Body of pancreas (tissue), 4 donors: ENCODE measurements at regions of chr2 and their contacts with region 1.

Region 1: GRCh38 chr2:13006829-13007717 is 290.3 kb downstream of the TRIB2 start:
- DNase-seq: peak; percentile 64 to 70 (median 67)
- ATAC-seq: peak; percentile 88
- H3K4me3 ChIP-seq: no peak overlapping the region
- H3K27ac ChIP-seq: no peak overlapping the region
- H3K4me1 ChIP-seq: peaks cover 17% of the 10 kb centered on the region
- H3K27me3 ChIP-seq: no peaks in the 10 kb centered on the region
- CTCF ChIP-seq: peak; percentile 80 to 95 (median 85)
- POLR2A ChIP-seq: no peak

Region 2: GRCh38 chr2:11863513-11864328 is 1143.4 kb before region 1 on chr2:
- intact Hi-C with region 1: loop called (anchors 10 kb)
- DNase-seq: peak; percentile 77 to 82 (median 81)
- ATAC-seq: peak; percentile 90
- H3K4me3 ChIP-seq: no peak overlapping the region
- H3K27ac ChIP-seq: peak overlapping the region in 1 of 4 donors; percentile 30
- H3K4me1 ChIP-seq: peaks cover 5% of the 10 kb centered on the region
- H3K27me3 ChIP-seq: no peaks in the 10 kb centered on the region
- CTCF ChIP-seq: peak; percentile 71 to 95 (median 86)
- POLR2A ChIP-seq: no peak

Region 3: GRCh38 chr2:13135856-13136255 is 128.8 kb after region 1 on chr2:
- intact Hi-C with region 1: no loop called
- DNase-seq: no peak
- ATAC-seq: no peak
- H3K4me3 ChIP-seq: no peak overlapping the region
- H3K27ac ChIP-seq: no peak overlapping the region
- H3K4me1 ChIP-seq: no peaks in the 10 kb centered on the region
- H3K27me3 ChIP-seq: no peaks in the 10 kb centered on the region
- CTCF ChIP-seq: no peak
- POLR2A ChIP-seq: no peak